ENCODE measurements at regions of chr11 and their contacts with region 1.

Region 1: DNA sequence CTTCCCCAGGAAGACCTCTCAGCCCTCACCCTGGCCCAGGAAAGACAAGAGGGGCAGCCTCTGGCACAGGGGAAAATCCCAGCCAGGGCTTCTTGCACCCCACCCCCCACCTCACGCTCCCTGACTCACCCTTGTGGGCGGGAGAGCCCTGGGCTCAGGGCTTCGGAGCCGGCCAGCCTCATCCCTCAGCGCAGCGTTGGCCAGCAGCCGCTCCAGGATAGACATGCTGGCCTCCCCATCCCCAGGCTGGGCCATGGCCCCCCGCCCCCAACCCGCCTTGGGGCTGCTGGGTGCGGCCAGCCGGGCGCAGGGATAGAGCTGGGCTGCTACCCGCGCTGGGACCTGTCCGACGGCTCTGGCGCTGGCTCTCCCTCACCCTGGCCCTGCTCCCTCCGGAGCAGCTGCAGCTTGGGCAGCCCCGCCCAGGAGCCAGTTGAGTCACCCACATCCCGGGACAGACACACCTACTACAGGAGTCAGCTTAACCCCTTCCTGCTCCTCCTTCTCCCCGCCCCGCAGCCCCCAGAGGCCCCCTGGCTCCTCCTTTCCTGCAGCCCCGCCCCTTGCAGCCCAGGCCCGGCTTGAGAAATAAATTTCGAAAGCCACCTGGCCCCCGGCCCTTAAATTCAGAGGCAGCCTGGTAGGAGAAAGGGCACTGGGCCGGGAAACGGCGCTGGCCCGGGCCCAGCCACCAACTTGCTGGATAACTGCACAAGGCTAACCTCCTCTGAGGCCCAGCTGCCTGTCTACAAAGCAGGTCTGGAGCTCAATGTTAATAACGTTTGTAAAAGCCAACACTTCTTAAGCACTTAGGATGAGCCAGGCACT is 13.4 kb downstream of the TNKS1BP1 start:
- DNase-seq: peak; percentile 79
- H3K4me3 ChIP-seq: peak overlapping the region; percentile 49
- H3K27me3 ChIP-seq: no peaks in the 10 kb centered on the region
- CTCF ChIP-seq: no peak

Region 2: DNA sequence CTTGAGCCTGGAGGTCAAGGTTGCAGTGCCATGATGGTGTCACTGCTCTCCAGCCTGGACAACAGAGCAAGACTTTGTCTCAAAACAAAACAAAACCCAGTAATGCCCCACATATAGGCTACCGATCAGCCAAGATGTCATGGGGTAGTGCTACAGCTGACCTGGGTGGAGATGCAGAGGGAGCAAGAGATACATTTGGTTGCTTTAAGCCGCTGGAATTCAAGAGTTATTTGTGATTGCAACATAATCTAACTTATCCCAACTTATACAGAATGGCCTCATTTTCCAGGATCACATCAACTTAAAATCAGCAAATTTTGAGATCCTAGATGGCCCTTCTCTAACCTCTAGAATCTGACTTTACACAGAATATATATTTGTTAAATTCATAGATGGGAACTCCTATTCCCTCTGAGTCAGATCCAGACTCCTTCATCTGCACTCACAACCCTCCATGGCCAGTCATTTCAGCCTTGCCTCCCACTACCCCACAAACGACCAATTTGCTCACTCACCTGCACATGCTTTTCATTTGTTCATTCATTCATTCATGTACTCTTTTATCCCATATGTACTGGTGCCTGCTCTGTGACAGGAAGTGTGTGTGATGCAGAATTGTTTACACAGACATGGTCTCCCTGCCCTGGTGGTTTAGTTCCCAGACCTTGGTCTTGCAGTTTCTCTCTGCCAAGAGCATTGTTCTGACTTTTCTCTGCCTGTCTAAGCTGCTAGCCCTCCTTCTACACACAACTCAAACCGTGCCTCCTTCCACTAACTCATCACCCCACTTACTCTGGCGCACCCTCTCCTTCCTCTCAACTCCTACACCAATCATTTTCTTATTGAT is 50.2 kb before region 1 on chr11:
- CTCF ChIA-PET with region 1: no interaction called
- POLR2A ChIA-PET with region 1: no interaction called
- DNase-seq: no peak
- H3K4me3 ChIP-seq: no peak overlapping the region
- H3K27me3 ChIP-seq: no peaks in the 10 kb centered on the region; the same call in 1 of the 2 replicates
- CTCF ChIP-seq: no peak

Region 3: GRCh38 chr11:57322256-57323166 is 11.2 kb after region 1 on chr11:
- CTCF ChIA-PET with region 1: interaction called, 7 read pairs
- POLR2A ChIA-PET with region 1: interaction called, 12 read pairs
- DNase-seq: peak; percentile 98
- H3K4me3 ChIP-seq: peak overlapping the region; percentile 82
- H3K27me3 ChIP-seq: no peaks in the 10 kb centered on the region
- CTCF ChIP-seq: no peak

Measured in BJ (cell line).